Astrocyte of the cerebellum (primary cell): ENCODE measurements at regions of chr11 and their contacts with region 1.

Region 1: GRCh38 chr11:64321503-64321902 is 3.6 kb downstream of the PRDX5 start:
- DNase-seq: peak; percentile 66
- H3K4me3 ChIP-seq: no peak overlapping the region
- CTCF ChIP-seq: no peak

Region 2: DNA sequence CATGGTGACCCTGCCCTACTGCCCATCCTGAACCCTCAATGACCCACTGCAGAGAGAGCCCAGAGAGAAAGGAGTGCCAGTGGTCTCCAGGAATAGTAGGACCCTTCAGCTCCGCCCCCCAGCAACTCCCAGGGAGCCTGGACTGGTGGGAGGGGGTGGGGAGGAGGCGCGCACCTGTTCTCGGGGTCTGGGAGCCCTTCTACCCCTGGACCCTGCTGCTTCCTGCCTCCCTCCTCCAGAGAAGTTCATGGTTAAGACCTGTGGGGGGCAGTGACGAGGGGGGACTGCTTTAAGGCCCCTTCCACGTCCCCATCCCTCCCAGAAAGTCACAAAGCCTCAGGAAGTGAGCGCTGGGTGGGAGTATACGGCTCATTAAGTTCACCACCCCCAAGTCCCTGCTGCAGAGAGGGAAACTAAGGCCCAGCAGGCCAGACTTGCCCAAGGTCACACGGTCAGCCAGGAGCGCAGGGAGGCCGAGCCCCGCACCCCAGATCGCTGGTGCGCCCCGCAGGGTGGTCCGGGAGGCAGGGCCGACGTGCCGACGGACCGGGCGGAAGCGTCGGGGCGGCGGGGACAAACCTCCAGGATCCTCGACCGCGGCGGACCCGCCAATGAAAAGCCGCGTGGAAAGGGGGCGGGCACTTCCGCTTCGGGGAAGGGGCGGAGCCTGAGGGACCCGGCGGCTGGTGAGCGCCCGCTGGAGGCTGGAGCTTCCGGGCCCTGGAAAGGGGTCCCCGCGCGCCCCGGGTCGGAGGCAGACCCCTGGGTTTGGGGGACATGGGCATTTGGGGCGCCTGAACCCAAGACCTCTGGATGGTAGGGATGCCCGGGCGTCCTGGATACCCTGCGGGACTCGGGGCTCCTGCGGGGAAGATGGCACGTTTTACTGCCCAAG is 95.6 kb before region 1 on chr11 and contains the starts of genes NUDT22 and TRPT1:
- in situ Hi-C with region 1: no loop called
- DNase-seq: no peak
- H3K4me3 ChIP-seq: peak within 1 kb of the TSS; percentile 61
- CTCF ChIP-seq: peak; percentile 37

Region 3: DNA sequence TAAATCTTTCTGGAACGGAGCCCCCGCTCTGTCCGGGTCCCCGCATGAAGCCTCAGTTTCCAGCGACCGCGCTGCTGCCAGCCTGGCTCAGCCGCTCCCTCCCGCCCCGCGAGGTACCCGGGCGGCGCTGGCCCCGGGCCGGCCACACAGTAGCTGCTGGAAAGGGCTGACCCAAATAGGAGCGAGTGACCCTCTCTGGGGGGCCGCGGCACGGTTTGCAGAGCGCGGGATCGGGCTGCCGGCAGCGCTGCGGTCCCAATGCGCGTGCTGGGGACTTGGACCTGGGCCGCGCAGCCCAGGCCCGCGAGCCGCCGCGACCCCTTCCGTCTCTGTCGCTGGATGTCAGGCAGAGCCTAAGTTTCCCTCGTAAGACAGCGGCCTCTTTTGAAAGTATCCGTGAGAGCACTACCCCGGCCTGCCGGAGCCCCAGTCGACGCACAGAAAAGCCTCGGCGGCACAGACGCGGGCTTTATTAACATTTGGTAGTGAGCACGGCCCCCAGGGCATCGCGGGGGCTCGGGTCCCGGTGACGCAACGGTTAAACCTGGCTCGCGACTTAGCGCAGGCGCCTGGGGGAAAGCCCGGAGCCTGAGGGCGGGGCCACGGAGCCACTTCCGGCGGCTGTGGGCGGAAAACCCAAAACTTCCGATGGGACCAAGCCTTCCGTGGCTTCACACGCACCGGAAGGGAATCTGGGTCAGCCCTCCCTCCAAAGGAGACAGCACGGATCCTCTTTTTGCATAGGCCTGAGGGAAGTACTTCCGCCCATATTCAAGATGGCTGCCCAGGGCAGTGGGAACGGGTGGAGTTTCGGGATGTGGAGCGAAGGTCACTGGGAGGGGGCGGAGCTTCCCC is 51.9 kb before region 1 on chr11:
- in situ Hi-C with region 1: loop called (anchors 10 kb)
- DNase-seq: peak; percentile 100
- H3K4me3 ChIP-seq: peak overlapping the region; percentile 65
- CTCF ChIP-seq: peak; percentile 25

Region 4: GRCh38 chr11:64378335-64378880 is 56.9 kb after region 1 on chr11:
- in situ Hi-C with region 1: no loop called
- DNase-seq: no peak
- H3K4me3 ChIP-seq: no peak overlapping the region
- CTCF ChIP-seq: no peak